Naive thymus-derived CD4-positive, alpha-beta T cell (primary cell): ENCODE measurements at regions of chr1 and their contacts with region 1.

Region 1: DNA sequence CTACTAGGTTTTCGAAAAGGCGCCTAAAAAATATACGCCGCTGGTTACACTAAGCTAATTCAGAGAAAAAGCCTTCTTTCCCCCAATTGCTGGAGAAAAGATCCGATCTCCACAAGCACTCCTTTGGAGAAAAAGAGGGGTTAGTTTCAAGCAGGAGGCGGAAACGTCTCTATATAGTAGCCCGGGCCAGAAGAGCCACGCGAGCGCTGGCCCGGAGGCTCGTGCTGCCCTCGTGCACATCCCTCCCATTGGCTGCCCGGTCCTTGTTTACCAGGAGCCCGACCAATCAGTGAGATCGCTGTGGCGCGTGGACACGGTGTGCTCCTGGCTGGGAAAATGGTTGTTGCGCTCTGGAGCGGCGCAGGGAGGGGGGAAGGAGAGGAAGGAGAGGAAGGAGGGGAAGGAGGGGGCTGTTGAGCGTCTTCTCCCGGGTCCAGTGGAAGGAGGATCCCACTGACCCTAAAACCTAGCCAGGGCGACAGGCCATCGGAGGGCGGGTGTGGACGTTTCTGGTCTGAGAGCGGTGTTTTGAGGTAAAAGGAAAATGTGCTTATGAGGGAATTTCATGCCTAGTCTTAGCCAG is at the start of gene TXNIP:
- DNase-seq: peak; percentile 66 to 97 (median 94)
- ATAC-seq: peak; percentile 92
- H3K4me3 ChIP-seq: peak within 1 kb of the TSS; percentile 97
- H3K4me3 Mint-ChIP-seq: peak within 1 kb of the TSS; percentile 89 to 99 (median 98)
- H3K27ac ChIP-seq: peak within 1 kb of the TSS; percentile 91
- H3K27ac Mint-ChIP-seq: peak within 1 kb of the TSS; percentile 94 to 99 (median 97)
- H3K4me1 ChIP-seq: peaks cover 41 to 48% of the 10 kb centered on the region in 2 donors
- H3K4me1 Mint-ChIP-seq: peaks cover 43 to 72% (median 54%) of the 10 kb centered on the region in 7 donors
- H3K27me3 ChIP-seq: no peaks in the 10 kb centered on the region
- H3K27me3 Mint-ChIP-seq: peaks cover 0 to 3% (median 0%) of the 10 kb centered on the region in 5 donors
- total RNA-seq, gene TXNIP: 498 to 1,101 (median 659) TPM

Region 2: DNA sequence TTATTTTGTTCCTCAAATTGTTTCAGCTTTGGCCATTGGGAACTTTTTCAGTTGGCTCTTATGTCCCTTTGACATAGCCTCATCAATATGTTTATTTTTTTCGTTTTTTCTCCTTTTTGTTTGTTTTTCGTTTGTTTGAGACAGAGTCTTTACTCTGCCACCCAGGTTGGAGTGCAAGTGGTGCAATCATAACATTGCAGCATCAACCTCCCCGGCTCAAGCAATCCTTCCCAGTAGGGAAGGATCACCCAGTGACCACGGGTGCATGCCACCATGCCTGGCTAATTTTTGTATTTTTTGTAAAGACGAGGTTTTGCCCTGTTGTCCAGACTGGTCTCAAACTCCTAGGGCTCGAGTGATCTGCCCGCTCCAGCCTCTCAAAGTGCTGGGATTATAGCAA is 23.9 kb before region 1 on chr1:
- CTCF ChIA-PET with region 1: interaction called, 193 read pairs
- POLR2A ChIA-PET with region 1: interaction called, 1,779 read pairs
- intact Hi-C with region 1: no loop called
- DNase-seq: no peak
- ATAC-seq: no peak
- H3K4me3 ChIP-seq: no peak overlapping the region
- H3K4me3 Mint-ChIP-seq: peak overlapping the region in 1 of 10 donors; percentile 34
- H3K27ac ChIP-seq: no peak overlapping the region
- H3K27ac Mint-ChIP-seq: peak overlapping the region in 3 of 9 donors; percentile 26 to 67 (median 55)
- H3K4me1 ChIP-seq: peaks cover 5 to 7% of the 10 kb centered on the region in 2 donors
- H3K4me1 Mint-ChIP-seq: peaks cover 15 to 56% (median 43%) of the 10 kb centered on the region in 7 donors
- H3K27me3 ChIP-seq: no peaks in the 10 kb centered on the region
- H3K27me3 Mint-ChIP-seq: no peaks in the 10 kb centered on the region

Region 3: GRCh38 chr1:146007506-146008133 is 11.1 kb after region 1 on chr1:
- CTCF ChIA-PET with region 1: interaction called, 20 read pairs
- POLR2A ChIA-PET with region 1: interaction called, 1,779 read pairs
- intact Hi-C with region 1: loop called (anchors 1 kb)
- DNase-seq: peak in 1 of 9 donors; percentile 31
- ATAC-seq: no peak
- H3K4me3 ChIP-seq: no peak overlapping the region
- H3K4me3 Mint-ChIP-seq: peak overlapping the region in 9 of 10 donors; percentile 73 to 93 (median 83)
- H3K27ac ChIP-seq: peak overlapping the region; percentile 64
- H3K27ac Mint-ChIP-seq: peak overlapping the region; percentile 86 to 97 (median 93)
- H3K4me1 ChIP-seq: peaks cover 18 to 36% of the 10 kb centered on the region in 2 donors
- H3K4me1 Mint-ChIP-seq: peaks cover 31 to 56% (median 45%) of the 10 kb centered on the region in 7 donors
- H3K27me3 ChIP-seq: no peaks in the 10 kb centered on the region
- H3K27me3 Mint-ChIP-seq: no peaks in the 10 kb centered on the region

Region 4: GRCh38 chr1:146036965-146037646 is 40.6 kb after region 1 on chr1:
- CTCF ChIA-PET with region 1: no interaction called
- POLR2A ChIA-PET with region 1: interaction called, 61 read pairs
- intact Hi-C with region 1: loop called in 1 of 2 experiments (anchors 1 kb)
- DNase-seq: peak; percentile 52 to 88 (median 83)
- ATAC-seq: peak; percentile 66
- H3K4me3 ChIP-seq: peak overlapping the region; percentile 87
- H3K4me3 Mint-ChIP-seq: peak overlapping the region; percentile 95 to 99 (median 97)
- H3K27ac ChIP-seq: peak overlapping the region; percentile 69
- H3K27ac Mint-ChIP-seq: peak overlapping the region; percentile 93 to 100 (median 98)
- H3K4me1 ChIP-seq: peaks cover 0 to 6% of the 10 kb centered on the region in 2 donors
- H3K4me1 Mint-ChIP-seq: peaks cover 7 to 49% (median 39%) of the 10 kb centered on the region in 7 donors
- H3K27me3 ChIP-seq: no peaks in the 10 kb centered on the region
- H3K27me3 Mint-ChIP-seq: peaks cover 0 to 32% (median 0%) of the 10 kb centered on the region in 5 donors